Activated CD4-positive, alpha-beta memory T cell treated with anti-CD3 and anti-CD28 coated beads, Interleukin-2, amount 10 ng/mL, durations not matched to agents 7 days and 5 days (primary cell): ENCODE measurements at regions of chr12 and their contacts with region 1.

Region 1: GRCh38 chr12:75944097-75944904 is 87.3 kb downstream of the PHLDA1 start:
- DNase-seq: peak; percentile 31
- H3K4me3 Mint-ChIP-seq: peak overlapping the region; percentile 50
- H3K27ac Mint-ChIP-seq: peak overlapping the region; percentile 99
- H3K4me1 Mint-ChIP-seq: peaks cover 38% of the 10 kb centered on the region
- H3K27me3 Mint-ChIP-seq: no peaks in the 10 kb centered on the region

Region 2: DNA sequence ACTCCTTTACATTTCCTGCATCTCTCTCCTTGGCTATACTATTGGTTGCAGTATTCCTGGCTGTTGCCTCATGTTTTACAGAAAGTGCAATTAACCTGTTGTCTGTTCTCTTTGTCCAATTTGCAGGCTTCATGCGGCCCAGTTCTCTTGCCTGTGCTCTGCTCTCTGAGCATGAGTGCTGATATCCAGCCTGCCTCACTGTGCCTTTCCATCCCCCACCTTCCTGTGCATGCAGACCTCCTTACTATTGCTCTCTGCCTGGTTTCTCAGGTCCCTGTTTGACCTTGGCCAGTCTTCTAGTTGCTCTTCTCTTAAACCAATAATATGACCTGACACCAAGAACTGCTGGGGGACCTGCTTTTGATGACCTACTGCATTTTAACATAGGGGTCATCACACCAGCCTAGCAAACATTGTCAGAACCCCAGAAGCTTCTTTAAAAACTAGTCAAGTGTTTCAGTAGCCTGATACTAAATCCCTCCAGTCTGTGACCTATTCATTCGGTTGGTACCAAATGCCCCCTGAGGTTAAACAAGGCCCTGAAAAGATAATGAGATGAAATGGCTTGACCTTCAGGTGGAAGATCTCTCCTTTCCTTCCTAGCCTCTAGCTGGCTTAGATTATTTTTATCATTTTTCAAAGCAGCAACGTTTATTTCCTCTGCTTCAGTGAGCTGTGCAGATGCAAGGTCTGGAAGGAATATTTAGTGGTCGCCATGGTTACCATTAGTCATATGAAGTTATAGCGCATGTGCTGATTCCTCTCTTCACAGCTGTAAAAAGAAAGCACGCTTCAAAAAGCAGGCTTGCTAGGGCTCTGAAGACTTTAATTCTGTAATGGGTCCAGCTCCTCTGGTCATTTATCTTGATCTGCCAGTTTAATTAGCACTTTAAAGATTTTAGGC is 129.2 kb before region 1 on chr12:
- CTCF ChIA-PET with region 1: no interaction called
- POLR2A ChIA-PET with region 1: no interaction called
- DNase-seq: no peak
- H3K4me3 Mint-ChIP-seq: no peak overlapping the region
- H3K27ac Mint-ChIP-seq: no peak overlapping the region
- H3K4me1 Mint-ChIP-seq: peaks cover 24% of the 10 kb centered on the region
- H3K27me3 Mint-ChIP-seq: no peaks in the 10 kb centered on the region

Region 3: DNA sequence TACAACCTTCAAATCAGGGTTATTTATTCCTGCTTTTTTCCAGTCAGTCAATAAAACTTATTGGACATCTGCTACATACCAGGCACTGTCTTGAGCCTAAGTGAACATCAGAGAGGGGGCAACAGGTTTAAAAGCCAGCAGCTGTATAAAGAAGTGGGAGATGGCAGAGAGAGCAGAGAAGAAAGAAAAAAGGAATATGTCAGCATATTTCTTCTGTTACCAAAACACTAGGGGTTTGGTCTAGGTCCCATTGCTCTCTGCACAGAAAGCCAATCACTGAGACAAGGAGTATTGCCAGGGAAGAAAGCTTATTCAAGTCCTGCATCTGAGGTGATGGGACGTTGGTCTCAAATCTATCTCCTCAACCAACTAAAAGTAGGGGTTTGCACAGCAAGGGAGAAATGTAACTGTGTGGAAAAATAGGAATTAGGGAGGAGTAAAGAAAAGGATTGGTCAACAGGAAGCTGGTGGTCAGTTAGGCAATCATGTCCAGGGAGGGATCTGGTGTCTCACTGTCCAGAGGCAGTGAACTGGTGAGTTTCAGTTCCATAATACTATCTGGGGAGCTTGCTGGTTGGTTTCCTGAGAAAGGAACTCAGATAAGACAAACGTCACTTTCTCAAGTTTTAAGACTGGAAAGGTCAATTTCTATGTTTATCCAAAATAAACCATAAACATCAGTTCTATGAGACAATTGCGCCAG is 20.2 kb before region 1 on chr12:
- CTCF ChIA-PET with region 1: no interaction called
- POLR2A ChIA-PET with region 1: interaction called, 12 read pairs
- DNase-seq: no peak
- H3K4me3 Mint-ChIP-seq: no peak overlapping the region
- H3K27ac Mint-ChIP-seq: no peak overlapping the region
- H3K4me1 Mint-ChIP-seq: peaks cover 26% of the 10 kb centered on the region
- H3K27me3 Mint-ChIP-seq: peaks cover 1% of the 10 kb centered on the region

Region 4: GRCh38 chr12:75933101-75933500 is 11.2 kb before region 1 on chr12:
- CTCF ChIA-PET with region 1: interaction called, 17 read pairs
- POLR2A ChIA-PET with region 1: interaction called, 28 read pairs
- DNase-seq: no peak
- H3K4me3 Mint-ChIP-seq: no peak overlapping the region
- H3K27ac Mint-ChIP-seq: no peak overlapping the region
- H3K4me1 Mint-ChIP-seq: peaks cover 34% of the 10 kb centered on the region
- H3K27me3 Mint-ChIP-seq: peaks cover 5% of the 10 kb centered on the region

Region 5: GRCh38 chr12:75960086-75960910 is 16.0 kb after region 1 on chr12:
- CTCF ChIA-PET with region 1: no interaction called
- POLR2A ChIA-PET with region 1: interaction called, 14 read pairs
- DNase-seq: no peak
- H3K4me3 Mint-ChIP-seq: no peak overlapping the region
- H3K27ac Mint-ChIP-seq: no peak overlapping the region
- H3K4me1 Mint-ChIP-seq: peaks cover 40% of the 10 kb centered on the region
- H3K27me3 Mint-ChIP-seq: no peaks in the 10 kb centered on the region

Region 6: DNA sequence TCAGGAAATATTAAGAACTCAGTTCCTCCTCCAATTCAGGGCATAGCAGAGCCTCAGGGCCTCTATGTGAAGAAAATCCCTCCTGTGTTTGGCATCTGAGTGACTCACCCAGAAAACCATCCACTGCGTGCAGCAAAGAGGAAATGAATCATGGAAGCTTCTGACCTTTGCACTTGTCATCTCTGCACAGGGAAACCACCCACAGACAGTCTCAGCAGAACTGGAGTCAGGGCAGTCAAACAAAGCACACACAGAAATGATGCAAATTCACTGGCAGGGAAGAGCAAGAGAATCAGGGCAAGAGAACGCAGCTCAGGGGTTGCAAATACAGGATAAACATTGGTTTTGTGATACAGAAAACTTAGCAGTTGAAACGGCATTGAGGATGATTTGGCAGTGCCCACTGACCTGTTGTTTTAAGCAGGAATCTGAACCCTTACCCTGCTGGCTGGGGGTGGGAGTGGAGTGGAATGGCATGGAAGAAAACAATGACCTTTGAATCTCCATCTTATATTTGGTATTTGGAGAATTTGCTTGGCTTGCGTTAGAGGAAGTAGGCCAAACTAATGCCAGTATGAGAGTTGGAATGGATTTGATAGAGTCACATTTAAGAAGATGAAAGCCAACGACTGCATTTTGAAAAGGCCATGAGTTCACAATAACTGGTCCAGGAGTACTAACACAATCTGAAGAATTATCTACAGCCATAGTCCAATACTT is 33.8 kb after region 1 on chr12:
- CTCF ChIA-PET with region 1: interaction called, 3 read pairs
- POLR2A ChIA-PET with region 1: interaction called, 38 read pairs
- DNase-seq: peak; percentile 86
- H3K4me3 Mint-ChIP-seq: peak overlapping the region; percentile 32
- H3K27ac Mint-ChIP-seq: peak overlapping the region; percentile 92
- H3K4me1 Mint-ChIP-seq: peaks cover 68% of the 10 kb centered on the region
- H3K27me3 Mint-ChIP-seq: no peaks in the 10 kb centered on the region

Region 7: GRCh38 chr12:76014007-76014406 is 69.7 kb after region 1 on chr12:
- CTCF ChIA-PET with region 1: no interaction called
- POLR2A ChIA-PET with region 1: no interaction called
- DNase-seq: no peak
- H3K4me3 Mint-ChIP-seq: no peak overlapping the region
- H3K27ac Mint-ChIP-seq: no peak overlapping the region
- H3K4me1 Mint-ChIP-seq: peaks cover 28% of the 10 kb centered on the region
- H3K27me3 Mint-ChIP-seq: no peaks in the 10 kb centered on the region